Pancreas (tissue), 10 donors: ENCODE measurements at regions of chr5 and their contacts with region 1.

Region 1: GRCh38 chr5:97162045-97162444 is 19.6 kb upstream of the LIX1 start:
- DNase-seq: peak in 3 of 6 donors; percentile 22 to 59 (median 33)
- ATAC-seq: peak; percentile 76 to 89 (median 84)
- H3K4me3 ChIP-seq: no peak overlapping the region
- H3K27ac ChIP-seq: no peak overlapping the region
- H3K4me1 ChIP-seq: peaks cover 0 to 8% (median 0%) of the 10 kb centered on the region in 3 donors
- H3K27me3 ChIP-seq: no peaks in the 10 kb centered on the region
- CTCF ChIP-seq: peak; percentile 62 to 84 (median 74)

Region 2: DNA sequence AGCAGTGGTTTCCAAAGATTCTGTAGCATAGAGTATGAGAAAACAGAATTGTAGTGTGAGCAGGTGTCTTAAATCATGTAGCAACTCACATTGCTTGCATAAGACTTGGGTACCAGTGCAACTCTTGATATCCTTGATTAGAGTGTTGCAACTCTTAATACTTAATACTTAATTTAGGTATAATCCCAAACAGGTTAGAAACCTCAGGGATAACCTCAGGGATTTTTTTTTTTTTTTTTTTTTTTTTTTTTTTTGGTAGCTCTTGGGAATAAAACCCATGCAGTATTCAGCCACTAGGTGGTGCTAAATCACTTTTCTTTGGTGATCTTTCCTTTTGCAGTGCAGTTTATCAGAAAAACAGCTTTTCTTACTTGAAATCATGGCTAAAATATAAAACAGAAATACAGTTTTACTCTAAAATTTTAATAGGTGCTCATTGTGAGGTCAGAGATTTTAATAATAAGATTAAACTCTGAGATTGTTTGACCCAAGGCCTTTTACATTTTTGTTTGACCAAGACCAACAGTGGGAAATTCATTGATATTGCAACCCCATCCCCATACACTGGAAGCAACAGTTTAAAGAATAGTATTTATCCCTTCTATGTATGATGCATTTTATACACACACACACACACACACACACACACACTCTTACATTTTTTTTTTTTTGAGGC is 409.6 kb before region 1 on chr5:
- intact Hi-C with region 1: loop called in 1 of 3 experiments (anchors 10 kb)
- DNase-seq: peak in 3 of 6 donors; percentile 13 to 23 (median 22)
- ATAC-seq: peak; percentile 49 to 77 (median 70)
- H3K4me3 ChIP-seq: no peak overlapping the region
- H3K27ac ChIP-seq: no peak overlapping the region
- H3K4me1 ChIP-seq: no peaks in the 10 kb centered on the region
- H3K27me3 ChIP-seq: no peaks in the 10 kb centered on the region
- CTCF ChIP-seq: peak; percentile 56 to 70 (median 62)

Region 3: DNA sequence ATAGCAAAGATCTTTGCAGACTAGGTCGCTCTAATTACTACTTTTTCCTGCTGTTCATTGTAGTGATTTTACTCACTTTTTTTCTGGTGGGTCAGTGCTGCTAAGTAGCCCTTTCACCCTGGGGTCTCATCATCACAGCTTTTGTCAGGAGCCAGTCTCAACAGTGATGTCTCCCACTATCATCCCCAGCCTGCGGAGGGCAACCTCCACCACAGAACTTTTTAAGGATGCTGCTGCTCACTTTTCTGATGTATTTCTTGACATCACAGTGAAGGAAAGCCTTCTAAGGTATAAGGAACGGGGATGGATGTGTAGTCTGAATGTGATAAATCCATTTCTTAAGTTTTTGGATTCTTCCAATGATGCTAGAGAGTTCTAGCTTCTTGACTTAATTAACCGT is 263.5 kb after region 1 on chr5:
- intact Hi-C with region 1: no loop called
- DNase-seq: no peak
- ATAC-seq: no peak
- H3K4me3 ChIP-seq: no peak overlapping the region
- H3K27ac ChIP-seq: no peak overlapping the region
- H3K4me1 ChIP-seq: no peaks in the 10 kb centered on the region
- H3K27me3 ChIP-seq: no peaks in the 10 kb centered on the region
- CTCF ChIP-seq: no peak